ENCODE measurements at regions of chr7 and their contacts with region 1.

Region 1: GRCh38 chr7:85041605-85042216 is 145.1 kb downstream of the SEMA3D start:
- DNase-seq: peak; percentile 26 to 58
- ATAC-seq: peak in 4 of 8 donors; percentile 38 to 74 (median 61)
- H3K4me3 ChIP-seq: no peak overlapping the region
- H3K27ac ChIP-seq: no peak overlapping the region
- H3K4me1 ChIP-seq: no peaks in the 10 kb centered on the region
- H3K27me3 ChIP-seq: peaks cover 0 to 7% (median 0%) of the 10 kb centered on the region in 7 donors
- CTCF ChIP-seq: peak; percentile 24 to 83 (median 72)

Region 2: GRCh38 chr7:84455788-84456187 is 585.9 kb before region 1 on chr7:
- intact Hi-C with region 1: no loop called
- DNase-seq: no peak
- ATAC-seq: no peak
- H3K4me3 ChIP-seq: no peak overlapping the region
- H3K27ac ChIP-seq: no peak overlapping the region
- H3K4me1 ChIP-seq: no peaks in the 10 kb centered on the region
- H3K27me3 ChIP-seq: no peaks in the 10 kb centered on the region
- CTCF ChIP-seq: no peak

Region 3: DNA sequence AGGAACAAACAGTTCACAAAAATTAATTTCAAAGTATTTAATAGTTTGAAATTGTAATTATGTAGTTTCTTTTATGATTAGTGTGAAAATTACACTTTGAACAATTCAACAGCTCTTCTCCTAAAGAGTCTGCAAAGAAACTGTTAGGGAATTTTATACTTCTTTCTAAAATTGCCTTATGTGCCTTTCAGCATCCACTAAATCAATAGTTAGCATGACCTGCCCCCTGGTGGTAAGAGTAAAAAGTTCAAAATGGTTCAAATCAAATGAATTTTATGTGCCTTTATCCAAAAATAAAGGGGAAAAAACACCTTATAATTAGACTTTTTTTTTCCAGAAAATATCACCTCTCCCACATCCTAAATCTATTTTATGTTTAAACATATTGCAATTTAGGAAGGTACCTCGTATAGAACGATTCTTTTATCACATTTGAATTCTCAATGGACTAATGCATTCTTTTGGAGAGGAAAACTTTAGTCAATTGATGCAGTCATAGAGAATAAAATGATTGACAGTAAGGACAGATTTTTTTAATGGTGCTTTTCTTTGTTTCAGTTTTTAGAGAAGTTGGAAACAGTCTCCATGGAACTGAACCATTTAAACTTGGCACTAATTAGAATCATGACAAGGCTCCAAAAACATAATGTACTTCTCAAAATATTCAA is 18.5 kb before region 1 on chr7:
- intact Hi-C with region 1: no loop called
- DNase-seq: peak in 1 of 2 donors; percentile 46
- ATAC-seq: peak in 1 of 8 donors; percentile 43
- H3K4me3 ChIP-seq: no peak overlapping the region
- H3K27ac ChIP-seq: no peak overlapping the region
- H3K4me1 ChIP-seq: peaks cover 0 to 9% (median 0%) of the 10 kb centered on the region in 9 donors
- H3K27me3 ChIP-seq: no peaks in the 10 kb centered on the region
- CTCF ChIP-seq: peak; percentile 55 to 87 (median 69)

Region 4: DNA sequence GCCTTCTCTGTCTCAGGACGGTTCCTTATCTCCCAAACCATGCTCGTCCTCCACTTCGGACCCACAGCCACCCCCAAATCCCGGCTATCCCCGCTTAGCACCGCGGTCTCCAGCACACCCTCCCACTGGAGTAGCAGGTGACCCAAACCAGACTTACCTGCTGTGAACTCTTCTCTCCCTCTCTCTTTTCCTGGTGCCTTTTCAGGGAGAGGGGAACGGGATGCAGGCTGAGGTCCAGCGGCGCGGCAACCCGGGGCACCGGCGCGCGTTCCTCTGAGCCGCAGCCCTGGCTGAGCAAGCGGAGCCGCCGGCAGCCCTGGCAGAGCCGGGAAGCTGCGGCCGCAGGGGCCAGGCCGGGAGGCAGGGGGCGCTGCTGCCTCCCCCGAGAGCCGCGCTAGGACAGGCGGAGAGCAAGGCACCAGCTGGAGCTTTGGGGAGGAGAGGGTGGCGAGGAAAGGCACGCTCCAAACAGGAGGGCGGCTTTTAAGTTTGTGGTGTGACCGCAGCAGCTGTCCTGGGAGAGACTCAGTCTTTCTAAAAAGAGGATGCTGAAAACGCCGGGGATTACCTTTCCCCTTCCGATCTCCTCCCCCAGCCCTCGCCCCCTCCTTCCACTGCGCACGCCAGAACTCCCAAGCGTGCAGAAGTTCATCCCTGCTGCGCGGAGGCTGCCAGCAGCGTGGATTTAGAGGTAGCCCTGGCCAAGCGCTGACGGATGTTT is 145.0 kb after region 1 on chr7 and contains the start of gene SEMA3D:
- intact Hi-C with region 1: loop called in 8 of 10 experiments (anchors 5 to 10 kb)
- DNase-seq: peak; percentile 52 to 67
- ATAC-seq: peak; percentile 92 to 97 (median 93)
- H3K4me3 ChIP-seq: peak within 1 kb of the TSS; percentile 9 to 66 (median 52)
- H3K27ac ChIP-seq: peak within 1 kb of the TSS in 5 of 10 donors; percentile 14 to 61 (median 46)
- H3K4me1 ChIP-seq: peaks cover 0 to 21% (median 11%) of the 10 kb centered on the region in 9 donors
- H3K27me3 ChIP-seq: peaks cover 0 to 50% (median 43%) of the 10 kb centered on the region in 7 donors
- CTCF ChIP-seq: peak; percentile 24 to 81 (median 72)
- total RNA-seq, gene SEMA3D: 0.30 to 3.5 (median 1.2) TPM

Region 5: DNA sequence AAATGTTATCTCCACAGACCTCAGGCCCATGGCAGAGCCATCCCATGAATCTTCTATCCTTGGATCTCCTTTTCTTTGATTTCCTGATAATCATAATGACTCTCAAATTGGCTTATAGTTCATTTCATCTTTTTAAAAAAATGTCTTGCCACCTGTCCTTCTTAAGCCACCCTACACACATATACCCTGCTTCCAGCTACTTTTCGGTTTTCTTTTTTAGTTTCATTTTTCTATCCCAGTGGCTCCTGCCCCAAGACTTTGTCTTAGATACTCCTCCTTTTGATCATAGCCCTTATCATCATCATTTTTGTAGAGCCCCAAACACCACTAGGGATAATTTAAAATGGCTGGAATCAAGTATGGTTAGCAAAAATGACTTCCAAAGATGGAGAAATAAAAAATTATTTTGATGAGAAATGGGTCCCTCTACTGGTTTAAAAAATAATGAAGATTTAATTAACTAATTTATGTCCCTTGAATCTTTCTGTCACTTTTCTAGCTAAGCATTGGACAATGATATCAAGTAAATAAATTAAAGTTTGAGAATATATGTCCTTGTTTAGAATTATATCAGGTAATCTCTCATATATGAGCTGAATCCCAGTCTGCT is 422.4 kb after region 1 on chr7:
- intact Hi-C with region 1: loop called in 3 of 10 experiments (anchors 10 kb)
- DNase-seq: no peak
- ATAC-seq: no peak
- H3K4me3 ChIP-seq: no peak overlapping the region
- H3K27ac ChIP-seq: no peak overlapping the region
- H3K4me1 ChIP-seq: no peaks in the 10 kb centered on the region
- H3K27me3 ChIP-seq: no peaks in the 10 kb centered on the region
- CTCF ChIP-seq: peak in 2 of 9 donors; percentile 6 to 13

Region 6: DNA sequence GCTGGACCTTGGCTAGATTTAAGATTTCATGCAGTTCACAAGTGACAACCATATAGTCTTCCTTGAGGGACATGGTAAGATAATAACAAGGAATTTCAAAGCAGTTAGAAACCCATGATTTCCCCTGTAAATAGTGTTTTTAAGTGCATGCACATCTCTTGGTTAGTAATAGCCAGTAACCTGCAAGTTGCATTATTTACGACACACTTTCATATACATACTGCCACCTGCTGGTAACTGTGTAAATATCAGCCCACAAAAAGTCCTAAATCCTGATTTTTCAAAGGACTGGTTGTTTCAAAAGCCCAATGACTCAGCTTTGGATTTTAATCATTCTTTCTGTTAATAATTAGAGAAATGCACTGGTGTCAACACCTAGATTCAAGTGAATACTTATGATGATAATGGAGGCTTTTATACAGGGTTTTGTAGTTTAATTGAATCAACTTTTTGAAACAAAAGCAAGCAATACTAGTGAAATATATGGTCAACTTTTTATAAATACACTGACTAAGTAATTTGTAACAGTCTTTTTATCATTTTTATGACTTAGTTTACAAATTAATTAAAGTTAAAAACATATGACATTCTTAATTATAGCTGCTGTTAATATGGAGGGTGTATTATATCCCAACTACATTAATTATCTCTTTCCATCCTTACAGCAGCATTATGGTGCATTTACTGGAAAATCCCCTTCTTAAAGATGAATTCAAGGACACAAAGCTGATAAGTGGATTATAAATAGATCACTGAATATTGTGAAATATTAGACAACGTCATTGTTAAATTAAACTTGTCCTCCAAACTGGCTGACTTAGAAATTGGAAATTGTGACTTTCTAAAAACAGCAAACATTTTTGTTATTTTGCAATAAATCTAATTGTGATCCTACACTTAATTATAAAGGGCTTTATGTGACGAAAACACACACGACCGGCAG is 512.8 kb after region 1 on chr7:
- intact Hi-C with region 1: loop called in 9 of 10 experiments (anchors 5 kb)
- DNase-seq: peak in 1 of 2 donors; percentile 5
- ATAC-seq: peak in 1 of 8 donors; percentile 34
- H3K4me3 ChIP-seq: no peak overlapping the region
- H3K27ac ChIP-seq: no peak overlapping the region
- H3K4me1 ChIP-seq: peaks cover 0 to 5% (median 0%) of the 10 kb centered on the region in 9 donors
- H3K27me3 ChIP-seq: no peaks in the 10 kb centered on the region
- CTCF ChIP-seq: peak; percentile 25 to 78 (median 66)

Region 7: DNA sequence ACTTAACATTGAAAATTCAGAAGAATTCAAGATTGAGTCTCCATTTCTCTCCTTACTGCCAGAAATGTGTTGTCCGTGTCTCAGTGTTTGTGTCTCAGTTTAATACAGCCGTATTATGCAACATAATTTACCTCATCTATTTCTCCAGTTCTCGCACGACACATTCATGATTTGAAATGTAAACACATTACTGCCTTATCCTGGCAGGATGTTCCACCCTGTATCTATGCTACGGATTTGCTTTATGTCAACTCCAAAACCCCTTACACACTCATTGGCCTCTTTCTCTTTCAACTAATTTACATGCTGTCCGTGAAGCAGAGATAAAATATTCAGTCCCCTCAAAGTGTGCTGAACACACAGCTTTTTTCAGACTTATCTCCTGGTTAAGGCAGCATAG is 798.8 kb after region 1 on chr7:
- intact Hi-C with region 1: loop called in 2 of 10 experiments (anchors 10 kb)
- DNase-seq: no peak
- ATAC-seq: no peak
- H3K4me3 ChIP-seq: no peak overlapping the region
- H3K27ac ChIP-seq: no peak overlapping the region
- H3K4me1 ChIP-seq: no peaks in the 10 kb centered on the region
- H3K27me3 ChIP-seq: no peaks in the 10 kb centered on the region
- CTCF ChIP-seq: no peak

Measured in heart right ventricle (tissue), 16 donors.